ENCODE measurements at regions of chr6 and their contacts with region 1.

Region 1: GRCh38 chr6:38467566-38467965 is 172.2 kb downstream of the BTBD9 start:
- DNase-seq: no peak
- H3K4me3 ChIP-seq: no peak overlapping the region
- H3K27ac ChIP-seq: no peak overlapping the region
- H3K4me1 ChIP-seq: no peaks in the 10 kb centered on the region
- H3K27me3 ChIP-seq: no peaks in the 10 kb centered on the region

Region 2: DNA sequence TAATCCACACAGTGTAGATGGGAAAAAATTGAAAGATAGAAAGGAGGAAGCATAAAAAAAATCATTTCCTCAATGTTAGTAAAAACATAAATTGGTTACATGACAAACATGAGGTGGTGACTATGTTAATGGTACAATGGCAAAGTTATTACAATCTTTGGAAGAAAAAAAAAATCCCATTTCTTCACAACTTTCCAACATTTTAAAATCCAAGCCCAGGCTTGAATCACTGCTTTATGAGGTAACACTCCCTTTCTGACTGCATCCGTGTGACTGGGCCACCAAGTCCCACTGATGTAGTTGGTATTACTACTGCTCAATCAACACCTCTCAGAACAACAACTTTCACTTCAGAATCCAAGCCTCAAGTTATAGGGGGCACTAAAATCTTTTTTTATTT is 11.8 kb after region 1 on chr6:
- CTCF ChIA-PET with region 1: interaction called, 3 read pairs
- POLR2A ChIA-PET with region 1: interaction called, 10 read pairs
- DNase-seq: no peak
- H3K4me3 ChIP-seq: no peak overlapping the region
- H3K27ac ChIP-seq: no peak overlapping the region
- H3K4me1 ChIP-seq: peaks cover 0 to 8% (median 3%) of the 10 kb centered on the region in 4 experiments
- H3K27me3 ChIP-seq: no peaks in the 10 kb centered on the region

Region 3: DNA sequence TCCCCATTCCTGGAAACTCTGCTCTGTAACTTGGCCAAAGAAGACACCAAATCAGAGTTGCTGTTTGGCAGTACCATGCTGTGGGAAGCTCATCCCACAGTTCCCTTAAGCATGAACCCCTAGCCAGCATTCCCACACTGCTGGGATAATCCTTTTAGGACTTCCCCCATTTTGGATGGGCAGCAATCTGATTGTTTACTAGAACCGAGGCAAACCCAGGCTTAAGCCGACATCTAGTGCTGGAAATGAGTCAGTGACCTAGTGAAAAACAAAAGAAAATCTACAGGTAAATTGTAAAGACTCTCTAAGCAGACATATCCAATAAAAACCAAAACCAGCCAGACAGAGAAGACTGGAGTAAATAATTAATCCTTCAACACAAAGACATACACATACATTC is 252.7 kb after region 1 on chr6:
- CTCF ChIA-PET with region 1: no interaction called
- POLR2A ChIA-PET with region 1: no interaction called
- DNase-seq: no peak
- H3K4me3 ChIP-seq: no peak overlapping the region
- H3K27ac ChIP-seq: no peak overlapping the region
- H3K4me1 ChIP-seq: peaks cover 0 to 2% (median 2%) of the 10 kb centered on the region in 4 experiments
- H3K27me3 ChIP-seq: peaks cover 4 to 16% (median 7%) of the 10 kb centered on the region in 5 experiments

Measured in common myeloid progenitor, CD34-positive (primary cell).